Activated T-helper 1 cell treated with anti-CD3 and anti-CD28 coated beads, Interleukin-12 subunit alpha, Interleukin-12 subunit beta, Interleukin-2, Interleukin-4 antibody, amounts not matched to agents 30 ng/mL and 10 ng/mL and 1 ng/mL, durations not matched to agents 14 hours and 24 hours and 36 hours (primary cell): ENCODE measurements at regions of chr9 and their contacts with region 1.

Region 1: GRCh38 chr9:84261082-84261746 is 79.3 kb downstream of the SLC28A3 start:
- DNase-seq: peak; percentile 33
- H3K4me3 Mint-ChIP-seq: no peak overlapping the region
- H3K27ac Mint-ChIP-seq: no peak overlapping the region
- H3K4me1 Mint-ChIP-seq: peaks cover 21% of the 10 kb centered on the region
- H3K27me3 Mint-ChIP-seq: no peaks in the 10 kb centered on the region

Region 2: GRCh38 chr9:84170521-84171141 is 90.6 kb before region 1 on chr9:
- intact Hi-C with region 1: loop called (anchors 5 kb)
- DNase-seq: no peak
- H3K4me3 Mint-ChIP-seq: no peak overlapping the region
- H3K27ac Mint-ChIP-seq: no peak overlapping the region
- H3K4me1 Mint-ChIP-seq: no peaks in the 10 kb centered on the region
- H3K27me3 Mint-ChIP-seq: peaks cover 2% of the 10 kb centered on the region